ENCODE measurements at regions of chr5 and their contacts with region 1.

Region 1: GRCh38 chr5:172932313-172933017 is 26.8 kb upstream of the RPL26L1 start:
- DNase-seq: peak; percentile 53 to 79 (median 68)
- ATAC-seq: peak; percentile 98
- H3K4me3 ChIP-seq: no peak overlapping the region
- H3K4me3 Mint-ChIP-seq: no peak overlapping the region
- H3K27ac ChIP-seq: no peak overlapping the region
- H3K27ac Mint-ChIP-seq: peak overlapping the region in 8 of 9 donors; percentile 25 to 82 (median 52)
- H3K4me1 ChIP-seq: no peaks in the 10 kb centered on the region
- H3K4me1 Mint-ChIP-seq: peaks cover 0 to 13% (median 6%) of the 10 kb centered on the region in 7 donors
- H3K27me3 ChIP-seq: no peaks in the 10 kb centered on the region
- H3K27me3 Mint-ChIP-seq: no peaks in the 10 kb centered on the region

Region 2: DNA sequence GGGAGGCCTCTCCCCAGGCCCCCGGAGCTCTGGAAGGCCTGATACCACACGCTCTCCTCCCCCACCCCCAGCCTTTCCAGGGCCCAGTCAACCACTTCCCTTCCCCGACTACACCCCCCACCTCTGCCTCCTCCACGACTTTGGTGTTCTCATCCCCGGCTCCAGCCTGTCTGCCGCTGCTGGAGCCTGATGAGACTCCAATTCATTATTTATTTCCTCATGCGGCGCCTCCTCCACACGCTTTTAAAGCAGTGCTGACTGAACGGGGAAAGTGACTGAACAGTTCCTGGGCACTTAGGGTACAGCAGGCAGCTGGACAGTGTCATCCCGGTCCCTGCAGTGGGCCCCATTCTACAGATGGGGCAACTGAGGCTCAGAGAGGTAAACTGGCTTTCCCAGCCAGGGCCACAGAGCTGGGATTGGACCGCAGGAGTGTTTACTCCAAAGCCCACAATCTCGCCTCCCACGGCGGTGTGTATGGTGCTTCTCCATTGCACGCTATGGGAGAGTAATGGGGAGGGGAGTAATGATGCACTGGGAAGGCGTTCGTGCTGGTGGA is 10.9 kb after region 1 on chr5:
- CTCF ChIA-PET with region 1: interaction called, 10 read pairs
- POLR2A ChIA-PET with region 1: no interaction called
- intact Hi-C with region 1: no loop called
- DNase-seq: no peak
- ATAC-seq: no peak
- H3K4me3 ChIP-seq: no peak overlapping the region
- H3K4me3 Mint-ChIP-seq: no peak overlapping the region
- H3K27ac ChIP-seq: no peak overlapping the region
- H3K27ac Mint-ChIP-seq: no peak overlapping the region
- H3K4me1 ChIP-seq: no peaks in the 10 kb centered on the region
- H3K4me1 Mint-ChIP-seq: peaks cover 0 to 5% (median 0%) of the 10 kb centered on the region in 7 donors
- H3K27me3 ChIP-seq: no peaks in the 10 kb centered on the region
- H3K27me3 Mint-ChIP-seq: no peaks in the 10 kb centered on the region

Region 3: DNA sequence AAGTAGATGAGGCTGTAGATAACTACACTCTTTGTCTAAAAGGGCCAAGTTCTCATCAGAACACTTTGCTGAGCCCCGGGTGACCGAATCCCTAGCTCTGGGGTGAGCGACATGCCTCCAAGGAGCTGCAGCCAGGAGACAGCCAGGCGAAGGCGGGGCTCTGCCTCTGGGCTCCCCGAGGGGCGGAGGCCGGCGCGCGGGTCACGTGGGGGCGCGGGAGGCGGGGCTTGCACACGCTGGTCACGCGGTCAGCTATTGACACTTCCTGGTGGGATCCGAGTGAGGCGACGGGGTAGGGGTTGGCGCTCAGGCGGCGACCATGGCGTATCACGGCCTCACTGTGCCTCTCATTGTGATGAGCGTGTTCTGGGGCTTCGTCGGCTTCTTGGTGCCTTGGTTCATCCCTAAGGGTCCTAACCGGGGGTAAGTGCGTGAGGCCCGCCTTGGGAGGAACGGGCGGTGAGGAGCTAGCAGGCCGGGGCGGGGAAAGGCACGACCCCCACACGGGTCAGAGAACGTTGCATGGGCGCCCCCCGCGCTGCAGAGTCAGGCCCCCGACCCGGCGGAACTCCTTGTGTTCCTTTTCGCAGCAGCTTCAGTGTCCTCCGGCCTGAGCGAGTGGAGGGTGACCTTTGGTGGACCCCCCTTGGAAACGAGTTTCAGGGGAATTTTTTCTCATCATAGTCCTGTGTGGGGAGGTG is 51.2 kb after region 1 on chr5 and contains the start of gene ATP6V0E1:
- CTCF ChIA-PET with region 1: no interaction called
- POLR2A ChIA-PET with region 1: no interaction called
- intact Hi-C with region 1: no loop called
- DNase-seq: peak; percentile 86 to 98 (median 90)
- ATAC-seq: peak; percentile 91
- H3K4me3 ChIP-seq: peak within 1 kb of the TSS; percentile 64
- H3K4me3 Mint-ChIP-seq: peak within 1 kb of the TSS; percentile 88 to 99 (median 97)
- H3K27ac ChIP-seq: peak within 1 kb of the TSS; percentile 92
- H3K27ac Mint-ChIP-seq: peak within 1 kb of the TSS; percentile 92 to 99 (median 98)
- H3K4me1 ChIP-seq: peaks cover 16 to 26% of the 10 kb centered on the region in 2 donors
- H3K4me1 Mint-ChIP-seq: peaks cover 20 to 70% (median 46%) of the 10 kb centered on the region in 7 donors
- H3K27me3 ChIP-seq: no peaks in the 10 kb centered on the region
- H3K27me3 Mint-ChIP-seq: no peaks in the 10 kb centered on the region
- total RNA-seq, gene ATP6V0E1: 61.8 to 170 (median 119) TPM